Activated CD8-positive, alpha-beta memory T cell treated with anti-CD3 and anti-CD28 coated beads, Interleukin-2, amount 10 ng/mL, durations not matched to agents 7 days and 5 days (primary cell): ENCODE measurements at regions of chr6 and their contacts with region 1.

Region 1: GRCh38 chr6:42104095-42104806 is 38.2 kb downstream of the C6orf132 start:
- DNase-seq: peak; percentile 86
- ATAC-seq: peak; percentile 87
- H3K4me3 Mint-ChIP-seq: peak overlapping the region; percentile 54
- H3K27ac Mint-ChIP-seq: peak overlapping the region; percentile 75
- H3K4me1 Mint-ChIP-seq: peaks cover 42% of the 10 kb centered on the region
- H3K27me3 Mint-ChIP-seq: no peaks in the 10 kb centered on the region

Region 2: GRCh38 chr6:41344876-41345275 is 759.4 kb before region 1 on chr6:
- CTCF ChIA-PET with region 1: no interaction called
- DNase-seq: peak; percentile 84
- ATAC-seq: peak; percentile 99
- H3K4me3 Mint-ChIP-seq: peak overlapping the region; percentile 60
- H3K27ac Mint-ChIP-seq: peak overlapping the region; percentile 96
- H3K4me1 Mint-ChIP-seq: peaks cover 58% of the 10 kb centered on the region
- H3K27me3 Mint-ChIP-seq: peaks cover 10% of the 10 kb centered on the region

Region 3: DNA sequence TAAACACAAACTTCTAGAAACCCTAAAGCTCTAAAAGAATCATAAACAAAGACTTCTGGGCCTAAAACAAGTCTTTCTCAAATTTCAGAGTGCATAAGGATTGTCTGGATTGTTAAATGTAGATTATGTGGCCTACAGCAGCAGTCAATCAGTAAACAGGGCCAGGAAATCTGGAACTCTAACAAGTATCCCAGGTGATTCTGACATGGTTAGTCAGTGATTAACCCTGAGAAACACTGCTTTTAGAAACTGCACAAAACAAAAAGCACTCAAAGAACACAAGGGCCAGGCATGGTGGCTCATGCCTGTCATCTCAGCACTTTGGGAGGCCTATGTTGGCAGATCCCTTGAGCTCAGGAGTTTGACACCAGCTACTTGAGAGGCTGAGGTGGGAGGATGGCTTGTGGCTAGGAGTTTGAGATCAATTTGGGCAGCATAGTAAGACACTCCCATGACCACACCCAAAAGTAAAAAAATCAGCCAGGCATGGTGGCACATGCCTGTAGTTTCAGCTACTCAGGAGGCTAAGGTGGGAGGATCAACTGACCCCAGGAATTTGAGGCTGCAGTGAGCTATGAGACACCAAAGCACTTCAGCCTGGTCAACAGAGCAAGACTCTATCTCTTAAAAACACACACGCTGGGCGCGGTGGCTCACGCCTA is 189.3 kb before region 1 on chr6:
- CTCF ChIA-PET with region 1: no interaction called
- DNase-seq: no peak
- ATAC-seq: no peak
- H3K4me3 Mint-ChIP-seq: no peak overlapping the region
- H3K27ac Mint-ChIP-seq: peak overlapping the region; percentile 43
- H3K4me1 Mint-ChIP-seq: peaks cover 38% of the 10 kb centered on the region
- H3K27me3 Mint-ChIP-seq: no peaks in the 10 kb centered on the region

Region 4: DNA sequence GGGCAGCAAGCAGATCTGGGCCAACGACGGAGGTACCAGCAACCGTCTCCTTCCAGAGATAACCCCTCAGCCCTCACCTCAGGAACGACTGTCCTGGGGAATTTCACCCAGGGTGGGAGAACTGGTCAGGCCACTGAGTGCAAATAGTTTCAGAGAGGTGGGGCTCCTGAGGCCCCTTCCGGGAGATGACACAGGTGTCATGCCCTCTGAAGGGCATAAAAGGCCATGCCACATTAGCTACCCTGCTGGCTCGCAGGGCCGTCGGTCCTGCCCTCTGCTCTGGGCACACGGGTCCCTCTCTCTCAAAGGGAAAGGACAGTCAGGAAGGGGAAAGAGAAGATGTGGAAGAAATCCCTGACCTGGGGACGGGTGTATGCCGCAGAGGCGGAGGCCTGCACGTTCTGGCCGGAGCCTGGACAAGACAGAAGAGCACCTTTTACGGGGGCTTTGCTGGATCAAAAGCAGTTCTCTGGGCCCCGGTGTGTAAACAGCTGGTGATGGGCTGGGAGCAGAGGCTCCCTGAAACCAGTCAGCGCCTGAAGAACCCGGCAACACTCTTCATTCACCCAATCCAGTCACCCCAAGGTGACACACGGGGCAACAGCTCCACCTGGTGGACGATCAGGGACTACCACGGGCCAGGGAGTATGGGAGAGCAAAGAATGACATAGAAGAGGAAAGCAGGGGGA is 60.3 kb before region 1 on chr6:
- CTCF ChIA-PET with region 1: interaction called, 22 read pairs
- DNase-seq: peak; percentile 95
- ATAC-seq: peak; percentile 60
- H3K4me3 Mint-ChIP-seq: peak overlapping the region; percentile 61
- H3K27ac Mint-ChIP-seq: peak overlapping the region; percentile 95
- H3K4me1 Mint-ChIP-seq: peaks cover 89% of the 10 kb centered on the region
- H3K27me3 Mint-ChIP-seq: no peaks in the 10 kb centered on the region

Region 5: DNA sequence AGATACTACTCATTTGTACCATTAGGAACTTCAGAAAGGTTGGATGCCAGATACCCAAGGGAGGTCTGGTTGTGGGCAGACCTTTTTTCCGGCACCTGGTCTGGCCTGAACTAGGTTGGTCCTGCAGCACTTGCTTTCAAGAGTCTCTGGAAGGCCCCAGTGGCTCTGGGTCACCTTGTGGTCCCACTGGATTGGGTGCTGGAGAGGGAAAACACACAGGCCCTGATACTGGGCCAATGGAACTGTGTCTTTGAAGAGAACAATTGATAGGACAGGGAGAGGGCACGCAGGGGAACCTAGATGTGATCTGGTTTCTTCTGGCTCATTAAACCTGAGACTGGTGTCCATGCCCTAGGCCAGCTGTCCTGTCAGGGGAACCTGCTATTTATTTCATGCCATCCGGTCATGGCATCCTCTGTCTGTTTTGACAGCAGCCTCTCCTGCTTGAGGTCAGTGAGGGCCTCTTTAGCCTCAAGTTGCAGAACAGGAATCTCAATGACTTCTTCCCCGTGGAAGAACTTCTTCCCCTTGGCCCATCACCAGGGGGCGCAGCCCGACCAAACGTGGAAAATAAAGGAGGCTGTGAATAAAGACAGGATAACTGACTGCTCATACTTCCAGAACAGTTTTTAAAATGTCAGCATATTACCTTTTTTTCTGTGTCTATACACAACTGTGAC is 29.0 kb before region 1 on chr6:
- CTCF ChIA-PET with region 1: interaction called, 25 read pairs
- DNase-seq: peak; percentile 72
- ATAC-seq: no peak
- H3K4me3 Mint-ChIP-seq: no peak overlapping the region
- H3K27ac Mint-ChIP-seq: no peak overlapping the region
- H3K4me1 Mint-ChIP-seq: peaks cover 3% of the 10 kb centered on the region
- H3K27me3 Mint-ChIP-seq: no peaks in the 10 kb centered on the region

Region 6: DNA sequence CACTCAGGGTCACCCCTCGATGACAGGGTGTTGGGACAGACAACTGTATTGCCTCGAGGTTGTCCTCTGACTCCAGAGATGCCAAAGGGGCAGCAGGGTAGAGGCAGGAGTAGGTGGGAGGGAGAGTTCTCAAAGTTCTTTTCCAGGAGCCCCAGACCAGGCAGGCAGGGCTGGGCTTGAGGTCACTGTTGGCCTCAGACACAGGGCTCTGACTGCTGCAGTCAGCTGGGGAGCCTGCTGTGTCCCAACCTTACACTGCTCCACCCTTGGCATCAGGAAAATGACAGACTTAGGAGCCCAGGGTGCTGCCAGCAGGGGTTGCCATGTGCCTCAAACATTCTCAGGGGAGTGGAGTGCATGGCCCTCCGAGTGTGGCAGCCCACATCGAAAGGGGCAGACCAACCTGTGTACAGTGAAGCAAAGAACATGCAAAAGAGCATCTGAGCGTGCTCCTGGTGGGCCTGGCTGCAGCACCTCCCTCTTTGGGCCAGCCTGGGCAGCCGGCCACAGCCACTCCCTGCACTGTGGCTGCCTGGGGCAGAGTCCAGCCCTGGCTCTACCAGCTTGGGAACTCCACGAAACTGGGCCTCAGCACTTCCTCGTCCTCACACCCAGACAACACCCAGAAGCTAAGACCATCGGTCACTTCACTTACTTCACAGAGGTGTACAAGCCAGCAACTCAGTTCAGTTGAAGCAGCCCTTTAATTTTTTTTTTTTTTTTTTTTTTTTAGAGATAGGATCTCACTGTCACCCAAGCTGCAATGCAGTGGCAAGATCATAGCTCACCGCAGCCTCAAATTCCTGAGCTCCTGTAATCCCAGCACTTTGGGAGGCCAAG is 14.1 kb after region 1 on chr6:
- CTCF ChIA-PET with region 1: interaction called, 12 read pairs
- DNase-seq: no peak
- ATAC-seq: peak; percentile 12
- H3K4me3 Mint-ChIP-seq: no peak overlapping the region
- H3K27ac Mint-ChIP-seq: no peak overlapping the region
- H3K4me1 Mint-ChIP-seq: no peaks in the 10 kb centered on the region
- H3K27me3 Mint-ChIP-seq: peaks cover 12% of the 10 kb centered on the region

Region 7: DNA sequence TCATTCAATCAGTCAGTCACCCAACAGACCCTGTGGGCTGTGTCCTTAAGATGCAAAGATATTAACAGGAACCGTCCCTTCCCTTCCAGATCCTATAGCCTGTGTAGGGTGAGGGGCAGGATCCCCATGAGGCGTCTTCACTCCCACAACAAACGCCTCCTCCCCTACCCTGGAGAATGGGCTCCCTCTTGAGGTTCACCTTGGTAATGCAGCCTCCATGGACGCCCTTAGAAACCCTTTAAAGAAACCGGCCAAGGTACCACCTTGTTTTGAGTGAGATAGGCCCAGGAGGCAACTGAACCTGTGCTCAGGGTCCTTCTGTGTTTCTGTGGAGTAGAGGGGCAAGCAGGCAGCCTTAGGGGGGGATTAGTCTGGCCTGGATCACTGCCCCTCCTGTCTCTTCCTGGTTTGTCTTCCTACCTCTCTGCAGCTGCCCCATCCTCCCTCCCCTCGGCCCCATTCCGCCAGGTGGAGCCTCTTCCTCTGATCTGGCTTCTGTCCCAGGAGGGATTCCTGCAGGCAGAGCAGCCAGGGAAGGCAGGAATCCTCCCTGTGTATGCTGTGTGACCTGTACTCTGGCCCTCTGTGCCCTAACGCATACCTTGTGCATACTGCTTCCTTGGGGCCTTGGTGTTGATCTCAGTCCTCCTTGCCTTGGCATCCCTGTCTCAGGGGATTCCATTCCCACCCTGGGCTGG is 62.3 kb after region 1 on chr6:
- CTCF ChIA-PET with region 1: interaction called, 22 read pairs
- DNase-seq: peak; percentile 86
- ATAC-seq: peak; percentile 90
- H3K4me3 Mint-ChIP-seq: no peak overlapping the region
- H3K27ac Mint-ChIP-seq: peak overlapping the region; percentile 5
- H3K4me1 Mint-ChIP-seq: peaks cover 5% of the 10 kb centered on the region
- H3K27me3 Mint-ChIP-seq: peaks cover 9% of the 10 kb centered on the region

Region 8: DNA sequence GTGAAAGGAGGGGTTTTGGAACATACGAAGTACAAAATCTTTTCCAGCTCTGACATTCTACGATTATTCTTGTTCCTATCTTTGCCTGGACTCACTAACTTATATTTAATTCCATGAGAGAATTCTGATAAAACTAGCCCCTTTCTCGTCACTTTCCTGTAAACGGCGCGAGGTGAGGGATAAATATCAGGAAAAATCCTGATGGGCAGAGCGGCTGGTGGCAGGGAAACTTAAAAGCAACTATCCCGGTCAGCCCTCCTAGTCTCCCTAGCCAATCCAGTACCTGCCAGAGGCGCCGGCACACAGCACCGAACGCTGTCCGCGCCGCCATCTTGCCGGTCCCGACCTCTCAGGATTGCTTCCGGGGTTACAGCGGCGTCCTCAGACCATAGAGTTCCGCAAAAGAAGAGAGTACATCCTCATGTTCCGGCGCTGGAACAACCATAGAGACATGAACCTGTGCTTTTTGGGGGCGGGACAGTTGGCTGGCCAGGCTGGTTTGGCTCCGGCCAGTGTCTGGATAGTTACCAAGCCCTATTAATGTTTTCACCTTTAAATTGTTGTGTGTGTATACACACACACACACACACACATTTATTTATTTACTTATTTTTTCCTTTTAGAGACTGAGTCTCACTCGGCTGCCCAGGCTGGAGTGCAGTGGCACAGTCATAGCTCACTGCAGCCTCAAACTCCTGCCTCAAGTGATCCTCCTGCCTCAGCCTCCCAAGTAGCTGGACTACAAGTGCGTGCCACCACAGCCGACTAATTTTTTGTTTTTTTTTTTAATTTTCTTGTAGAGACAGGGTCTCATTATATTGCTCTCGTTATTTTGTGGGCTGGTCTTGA is 113.5 kb after region 1 on chr6 and contains the start of gene MRPS10:
- CTCF ChIA-PET with region 1: interaction called, 10 read pairs
- DNase-seq: peak; percentile 95
- ATAC-seq: peak; percentile 100
- H3K4me3 Mint-ChIP-seq: peak within 1 kb of the TSS; percentile 98
- H3K27ac Mint-ChIP-seq: peak within 1 kb of the TSS; percentile 92
- H3K4me1 Mint-ChIP-seq: peaks cover 35% of the 10 kb centered on the region
- H3K27me3 Mint-ChIP-seq: no peaks in the 10 kb centered on the region
- total RNA-seq, gene MRPS10: 28.8 to 36.5 TPM